ENCODE measurements at regions of chr15 and their contacts with region 1.

Region 1: DNA sequence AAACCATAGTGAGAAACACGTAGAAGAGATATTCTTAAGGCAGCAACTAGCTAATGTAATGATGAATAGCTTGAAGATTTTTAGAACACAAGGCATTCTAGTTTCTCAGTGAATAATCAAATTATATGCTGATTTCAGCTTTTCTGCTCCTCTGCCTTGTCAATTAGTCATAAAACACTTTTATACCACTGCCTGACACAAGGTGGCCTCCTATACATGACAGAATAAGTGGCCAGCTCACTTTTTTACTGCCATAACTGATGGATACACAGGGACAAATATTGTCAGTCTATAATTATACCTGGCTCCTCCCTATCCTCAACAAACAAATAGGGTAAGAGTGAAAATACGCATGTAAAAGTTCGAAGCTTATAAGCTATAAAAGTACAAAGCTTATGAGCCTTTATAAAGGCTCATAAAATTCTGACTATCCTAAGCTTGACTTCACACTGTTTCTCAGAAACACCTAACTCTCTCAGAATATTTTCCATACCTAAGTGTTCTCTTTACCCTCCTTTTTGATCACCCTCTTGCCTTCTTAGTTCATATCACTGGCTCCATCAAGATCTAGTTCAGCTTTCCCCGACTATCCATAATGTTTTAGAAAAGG is 81.6 kb downstream of the HERC1 start:
- DNase-seq: peak; percentile 64 to 76
- ATAC-seq: peak; percentile 93 to 97
- H3K4me3 ChIP-seq: no peak overlapping the region
- H3K27ac ChIP-seq: no peak overlapping the region
- H3K4me1 ChIP-seq: no peaks in the 10 kb centered on the region
- CTCF ChIP-seq: peak; percentile 93
- EP300 ChIP-seq: no peak
- POLR2A ChIP-seq: no peak
- RAD21 ChIP-seq: peak; percentile 92

Region 2: DNA sequence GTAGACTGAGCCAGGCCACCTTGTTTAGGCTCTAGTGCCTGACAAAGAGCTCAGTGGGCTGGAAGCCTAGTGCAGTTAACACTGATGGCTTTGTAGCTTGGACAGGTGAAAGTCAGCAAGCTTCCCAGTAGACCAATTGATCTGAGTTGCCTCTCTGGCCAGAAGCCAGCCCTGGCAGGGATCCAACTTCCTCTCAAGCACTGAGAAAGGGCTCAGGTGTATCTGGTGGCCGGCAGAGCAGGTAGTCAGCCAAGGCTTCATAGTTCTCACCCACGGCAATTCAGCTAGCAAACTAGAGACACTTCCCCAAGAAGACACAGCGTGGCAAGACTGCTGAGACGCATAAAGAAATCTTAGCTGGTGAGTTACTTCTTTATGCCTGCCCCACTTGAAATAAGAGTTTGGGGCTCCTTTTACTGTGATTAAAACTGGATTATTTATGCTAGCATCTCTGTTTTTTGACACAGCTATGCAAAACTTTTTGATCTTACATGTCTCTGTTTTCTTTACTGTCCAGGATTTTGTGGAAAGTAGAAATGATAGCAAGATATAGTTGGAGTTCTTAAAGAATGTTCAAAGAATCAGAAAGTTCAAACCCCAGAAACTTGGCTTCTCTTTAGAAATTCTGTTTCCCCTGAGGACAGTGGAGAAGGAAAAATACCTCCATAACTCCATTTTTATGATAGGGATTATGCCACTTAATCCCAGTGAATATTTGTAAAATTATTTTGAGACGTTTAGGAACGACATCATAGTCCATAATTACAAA is 362.1 kb before region 1 on chr15:
- CTCF ChIA-PET with region 1: no interaction called
- POLR2A ChIA-PET with region 1: no interaction called
- DNase-seq: no peak
- ATAC-seq: no peak
- H3K4me3 ChIP-seq: no peak overlapping the region
- H3K27ac ChIP-seq: no peak overlapping the region
- H3K4me1 ChIP-seq: no peaks in the 10 kb centered on the region
- CTCF ChIP-seq: no peak
- EP300 ChIP-seq: no peak
- POLR2A ChIP-seq: no peak
- RAD21 ChIP-seq: no peak

Region 3: GRCh38 chr15:63729115-63729884 is 22.9 kb before region 1 on chr15:
- CTCF ChIA-PET with region 1: interaction called, 10 read pairs
- POLR2A ChIA-PET with region 1: no interaction called
- DNase-seq: no peak
- ATAC-seq: no peak
- H3K4me3 ChIP-seq: no peak overlapping the region
- H3K27ac ChIP-seq: no peak overlapping the region
- H3K4me1 ChIP-seq: no peaks in the 10 kb centered on the region
- CTCF ChIP-seq: no peak
- EP300 ChIP-seq: no peak
- POLR2A ChIP-seq: no peak
- RAD21 ChIP-seq: no peak

Region 4: DNA sequence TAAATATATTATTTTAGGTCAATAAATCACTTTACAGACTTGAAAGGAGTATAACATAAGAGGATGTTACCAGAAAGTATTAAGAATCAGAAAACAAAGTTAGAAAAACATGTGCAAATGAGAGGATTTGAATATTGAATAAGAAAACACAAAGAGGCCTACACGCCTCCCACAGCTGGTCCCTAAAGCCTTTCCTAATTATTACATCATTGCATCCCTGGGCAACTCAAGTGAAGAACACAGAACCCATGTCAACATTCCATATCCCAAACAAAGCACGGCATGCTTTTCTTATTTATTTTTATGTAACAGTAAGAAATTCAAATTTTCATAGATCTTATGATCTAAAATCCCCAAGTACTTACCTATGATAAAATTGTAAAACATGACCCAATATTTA is 20.3 kb after region 1 on chr15:
- CTCF ChIA-PET with region 1: interaction called, 15 read pairs
- POLR2A ChIA-PET with region 1: no interaction called
- DNase-seq: no peak
- ATAC-seq: no peak
- H3K4me3 ChIP-seq: no peak overlapping the region
- H3K27ac ChIP-seq: no peak overlapping the region
- H3K4me1 ChIP-seq: no peaks in the 10 kb centered on the region
- CTCF ChIP-seq: no peak
- EP300 ChIP-seq: no peak
- POLR2A ChIP-seq: no peak
- RAD21 ChIP-seq: no peak

Region 5: DNA sequence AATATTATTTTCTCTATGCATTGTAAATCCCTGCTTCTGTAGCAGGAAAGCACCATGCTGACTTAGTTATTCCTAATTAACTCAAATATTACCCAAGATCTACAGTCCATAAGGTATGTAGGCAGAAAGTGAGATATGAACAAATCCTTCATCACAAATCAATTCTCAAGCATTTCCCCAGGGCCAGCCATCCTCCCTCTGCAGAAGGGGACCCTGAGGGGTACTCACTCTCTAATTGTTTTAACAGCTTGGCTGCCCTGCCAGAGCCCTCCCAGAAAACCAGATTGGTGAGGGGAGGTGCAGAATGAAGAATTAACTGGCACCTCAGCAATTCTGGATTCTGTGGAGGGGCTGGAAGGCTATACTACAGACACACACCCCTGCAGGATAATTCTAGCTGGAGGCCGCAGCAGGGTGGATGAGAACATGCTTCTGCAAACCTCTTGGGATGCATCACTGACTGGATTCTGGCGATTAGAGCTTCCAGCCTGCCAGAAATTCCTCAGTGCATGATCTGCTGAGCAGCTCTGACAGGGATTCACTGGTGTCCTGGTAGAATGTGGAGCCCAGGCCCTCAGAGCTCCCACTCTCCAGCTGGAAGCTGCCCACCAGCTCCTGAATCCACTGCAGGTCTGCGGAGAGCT is 170.2 kb after region 1 on chr15:
- CTCF ChIA-PET with region 1: interaction called, 12 read pairs
- POLR2A ChIA-PET with region 1: no interaction called
- DNase-seq: no peak
- ATAC-seq: no peak
- H3K4me3 ChIP-seq: no peak overlapping the region
- H3K27ac ChIP-seq: no peak overlapping the region
- H3K4me1 ChIP-seq: no peaks in the 10 kb centered on the region
- CTCF ChIP-seq: no peak
- EP300 ChIP-seq: no peak
- POLR2A ChIP-seq: no peak
- RAD21 ChIP-seq: no peak

Region 6: GRCh38 chr15:64060716-64061115 is 308.5 kb after region 1 on chr15:
- CTCF ChIA-PET with region 1: interaction called, 139 read pairs
- POLR2A ChIA-PET with region 1: no interaction called
- DNase-seq: no peak
- ATAC-seq: no peak
- H3K4me3 ChIP-seq: no peak overlapping the region
- H3K27ac ChIP-seq: no peak overlapping the region
- H3K4me1 ChIP-seq: no peaks in the 10 kb centered on the region
- CTCF ChIP-seq: no peak
- EP300 ChIP-seq: no peak
- POLR2A ChIP-seq: no peak
- RAD21 ChIP-seq: no peak

Measured in A549 (cell line).